Heart right ventricle (tissue), 16 donors: ENCODE measurements at regions of chr10 and their contacts with region 1.

Region 1: DNA sequence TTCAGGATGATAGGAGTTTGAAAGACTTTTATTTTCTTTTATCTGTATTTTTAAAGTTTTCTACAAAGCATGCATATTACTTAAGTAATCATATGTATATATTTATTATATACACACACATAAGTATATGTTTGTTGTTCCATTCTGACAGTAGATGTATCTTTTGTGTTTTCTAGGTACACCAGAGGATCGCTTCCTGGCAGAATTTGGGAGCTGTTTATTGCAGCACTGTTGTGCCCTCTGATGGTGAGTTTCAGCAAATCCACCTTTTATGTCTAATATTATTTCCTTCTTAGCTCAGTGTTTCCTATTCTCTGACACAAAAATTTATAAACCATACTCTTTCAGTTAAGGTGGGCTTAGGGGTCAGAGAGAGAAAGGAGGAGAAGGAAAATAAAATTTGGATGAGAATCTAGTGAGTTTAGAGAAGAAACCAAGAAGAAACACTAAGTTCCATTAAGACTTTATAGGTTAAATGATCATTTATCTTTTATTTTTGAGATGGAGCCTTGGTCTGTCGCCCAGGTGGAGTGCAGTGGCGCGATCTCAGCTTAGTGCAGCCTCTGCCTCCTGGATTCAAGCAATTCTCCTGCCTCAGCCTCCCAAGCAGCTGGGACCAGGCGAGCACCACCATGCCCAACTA is 59.2 kb upstream of the OIT3 start:
- DNase-seq: peak in 1 of 2 donors; percentile 64
- ATAC-seq: peak in 7 of 8 donors; percentile 75 to 91 (median 83)
- H3K4me3 ChIP-seq: no peak overlapping the region
- H3K27ac ChIP-seq: no peak overlapping the region
- H3K4me1 ChIP-seq: peaks cover 0 to 43% (median 18%) of the 10 kb centered on the region in 9 donors
- H3K27me3 ChIP-seq: no peaks in the 10 kb centered on the region
- CTCF ChIP-seq: peak; percentile 44 to 84 (median 71)

Region 2: GRCh38 chr10:70931168-70931815 is 1903.0 kb before region 1 on chr10:
- intact Hi-C with region 1: loop called in 1 of 10 experiments (anchors 5 kb)
- DNase-seq: no peak
- ATAC-seq: no peak
- H3K4me3 ChIP-seq: no peak overlapping the region
- H3K27ac ChIP-seq: no peak overlapping the region
- H3K4me1 ChIP-seq: peaks cover 0 to 13% (median 6%) of the 10 kb centered on the region in 9 donors
- H3K27me3 ChIP-seq: peaks cover 0 to 12% (median 0%) of the 10 kb centered on the region in 7 donors
- CTCF ChIP-seq: no peak

Region 3: GRCh38 chr10:72625608-72626443 is 208.5 kb before region 1 on chr10 and contains the start of gene MICU1:
- intact Hi-C with region 1: loop called in 3 of 10 experiments (anchors 5 kb)
- DNase-seq: peak; percentile 92 to 97
- ATAC-seq: peak; percentile 100
- H3K4me3 ChIP-seq: peak within 1 kb of the TSS; percentile 66 to 95 (median 81)
- H3K27ac ChIP-seq: peak within 1 kb of the TSS; percentile 36 to 88 (median 84)
- H3K4me1 ChIP-seq: peaks cover 2 to 20% (median 11%) of the 10 kb centered on the region in 9 donors
- H3K27me3 ChIP-seq: no peaks in the 10 kb centered on the region
- CTCF ChIP-seq: no peak
- total RNA-seq, gene MICU1: 41.3 to 54.1 (median 45.9) TPM

Region 4: GRCh38 chr10:72692057-72692910 is 142.0 kb before region 1 on chr10 and contains the start of gene MCU:
- intact Hi-C with region 1: loop called in 9 of 10 experiments (anchors 1 to 5 kb)
- DNase-seq: peak; percentile 93 to 96
- ATAC-seq: peak; percentile 97 to 99 (median 98)
- H3K4me3 ChIP-seq: peak within 1 kb of the TSS; percentile 43 to 91 (median 84)
- H3K27ac ChIP-seq: peak within 1 kb of the TSS; percentile 83 to 99 (median 94)
- H3K4me1 ChIP-seq: peaks cover 0 to 39% (median 27%) of the 10 kb centered on the region in 9 donors
- H3K27me3 ChIP-seq: no peaks in the 10 kb centered on the region
- CTCF ChIP-seq: no peak
- total RNA-seq, gene MCU: 12.0 to 19.0 (median 15.2) TPM

Region 5: DNA sequence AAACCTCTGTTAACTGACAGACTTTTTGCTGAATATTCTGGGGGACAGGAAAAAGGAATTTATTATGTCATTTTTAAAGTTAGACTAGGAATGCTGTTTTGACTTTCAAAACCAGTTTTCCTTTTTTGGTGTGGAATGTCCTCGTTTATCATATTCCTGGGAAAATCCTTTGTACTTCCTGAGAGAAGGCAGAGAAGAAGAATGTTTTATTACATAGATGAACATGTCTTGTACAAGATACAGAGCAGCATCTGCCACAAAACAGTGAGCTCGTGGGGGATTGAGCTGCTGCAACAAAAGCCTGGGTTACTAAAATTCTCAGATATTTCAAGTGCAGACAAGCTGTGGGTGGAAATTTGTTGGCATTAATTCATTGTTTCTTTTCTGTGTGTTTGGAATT is 122.2 kb before region 1 on chr10:
- intact Hi-C with region 1: loop called in 1 of 10 experiments (anchors 5 kb)
- DNase-seq: no peak
- ATAC-seq: peak in 3 of 8 donors; percentile 32 to 54 (median 38)
- H3K4me3 ChIP-seq: peak overlapping the region in 2 of 10 donors; percentile 16 to 19
- H3K27ac ChIP-seq: peak overlapping the region in 8 of 10 donors; percentile 15 to 73 (median 52)
- H3K4me1 ChIP-seq: peaks cover 0 to 53% (median 32%) of the 10 kb centered on the region in 9 donors
- H3K27me3 ChIP-seq: no peaks in the 10 kb centered on the region
- CTCF ChIP-seq: no peak